Activated CD8-positive, alpha-beta T cell treated with anti-CD3 and anti-CD28 coated beads for 36 hours (primary cell): ENCODE measurements at regions of chr3 and their contacts with region 1.

Region 1: DNA sequence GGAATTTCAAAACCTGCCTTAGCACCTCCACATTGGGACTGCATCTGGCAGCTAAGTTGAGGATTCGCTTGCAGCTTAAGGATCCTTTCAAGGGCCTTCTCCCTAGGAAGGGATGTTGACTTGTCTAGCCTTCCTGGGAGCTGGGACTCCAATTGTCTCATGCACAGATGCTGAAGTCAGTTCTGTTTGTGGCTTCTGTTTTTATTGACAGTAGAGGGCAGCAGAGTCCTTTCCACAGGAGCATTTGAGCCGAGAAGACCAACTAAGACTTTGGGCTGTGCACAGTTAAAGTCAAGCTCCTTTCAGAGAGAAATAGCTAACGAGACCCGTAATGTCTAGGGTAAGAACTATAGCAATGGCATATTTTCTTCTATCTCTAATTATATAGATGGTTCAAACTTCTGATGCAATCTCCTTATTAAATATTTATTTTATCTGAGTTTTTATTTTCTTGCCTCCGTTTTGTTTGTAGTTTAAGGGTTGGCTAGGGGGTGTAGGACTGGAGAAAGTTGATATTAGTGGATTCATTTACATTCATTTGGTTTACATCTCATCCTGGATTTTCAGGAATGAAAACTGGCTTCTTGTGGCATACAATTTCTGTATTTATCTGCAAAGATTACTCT is 59.7 kb upstream of the KBTBD8 start:
- DNase-seq: peak; percentile 33
- ATAC-seq: peak; percentile 39
- H3K4me3 Mint-ChIP-seq: no peak overlapping the region
- H3K27ac Mint-ChIP-seq: no peak overlapping the region
- H3K4me1 Mint-ChIP-seq: no peaks in the 10 kb centered on the region
- H3K27me3 Mint-ChIP-seq: peaks cover 27% of the 10 kb centered on the region
- CTCF ChIP-seq: peak; percentile 67

Region 2: DNA sequence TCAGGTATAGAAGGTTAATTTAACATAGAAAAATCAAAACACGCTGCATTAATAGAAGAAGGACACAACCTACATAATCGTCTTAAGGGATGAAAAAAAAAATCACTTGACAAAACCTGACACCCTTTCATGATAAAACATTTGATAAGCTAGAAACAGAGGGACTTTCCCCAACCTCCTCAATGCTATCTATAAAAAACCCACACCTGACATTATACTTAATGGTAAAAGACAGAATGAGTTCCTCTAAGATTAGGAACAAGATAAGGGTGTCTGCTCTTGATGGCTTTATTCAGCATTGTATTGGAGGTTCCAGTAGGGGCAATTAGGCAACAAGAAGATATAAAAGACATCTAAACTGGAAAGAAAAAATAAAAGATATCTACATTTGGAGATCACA is 10.2 kb before region 1 on chr3:
- CTCF ChIA-PET with region 1: interaction called, 10 read pairs
- POLR2A ChIA-PET with region 1: no interaction called
- intact Hi-C with region 1: no loop called
- DNase-seq: no peak
- ATAC-seq: no peak
- H3K4me3 Mint-ChIP-seq: no peak overlapping the region
- H3K27ac Mint-ChIP-seq: no peak overlapping the region
- H3K4me1 Mint-ChIP-seq: no peaks in the 10 kb centered on the region
- H3K27me3 Mint-ChIP-seq: peaks cover 8% of the 10 kb centered on the region
- CTCF ChIP-seq: no peak

Region 3: DNA sequence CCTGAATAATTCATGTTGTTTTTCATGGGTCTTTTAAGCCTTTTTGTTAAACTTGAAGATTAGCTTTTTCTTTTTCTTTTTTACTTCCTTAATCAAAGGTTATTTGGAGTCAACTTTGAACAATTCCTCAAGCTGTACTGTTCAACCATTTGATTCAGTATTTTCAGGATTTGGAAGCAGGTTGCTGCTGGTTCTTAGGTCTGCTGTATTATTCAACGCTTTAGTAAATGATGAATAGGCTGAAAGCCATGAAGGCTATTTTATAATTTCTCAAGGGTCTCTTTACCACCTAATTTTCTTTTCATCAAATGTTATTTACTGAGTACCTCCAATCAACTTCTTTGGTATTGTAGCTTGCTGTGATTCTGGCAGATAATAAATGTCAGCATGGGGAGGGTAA is 13.9 kb after region 1 on chr3:
- CTCF ChIA-PET with region 1: interaction called, 15 read pairs
- POLR2A ChIA-PET with region 1: no interaction called
- intact Hi-C with region 1: no loop called
- DNase-seq: no peak
- ATAC-seq: no peak
- H3K4me3 Mint-ChIP-seq: no peak overlapping the region
- H3K27ac Mint-ChIP-seq: no peak overlapping the region
- H3K4me1 Mint-ChIP-seq: no peaks in the 10 kb centered on the region
- H3K27me3 Mint-ChIP-seq: peaks cover 2% of the 10 kb centered on the region
- CTCF ChIP-seq: no peak

Region 4: GRCh38 chr3:67037615-67038014 is 99.2 kb after region 1 on chr3:
- CTCF ChIA-PET with region 1: interaction called, 10 read pairs
- POLR2A ChIA-PET with region 1: no interaction called
- intact Hi-C with region 1: no loop called
- DNase-seq: no peak
- ATAC-seq: no peak
- H3K4me3 Mint-ChIP-seq: no peak overlapping the region
- H3K27ac Mint-ChIP-seq: no peak overlapping the region
- H3K4me1 Mint-ChIP-seq: no peaks in the 10 kb centered on the region
- H3K27me3 Mint-ChIP-seq: no peaks in the 10 kb centered on the region
- CTCF ChIP-seq: no peak